ENCODE measurements at regions of chr1 and their contacts with region 1.

Region 1: GRCh38 chr1:150961799-150962198 is 12.8 kb downstream of the CERS2 start:
- DNase-seq: no peak

Region 2: GRCh38 chr1:150441121-150441520 is 520.7 kb before region 1 on chr1:
- intact Hi-C with region 1: no loop called
- DNase-seq: no peak

Region 3: GRCh38 chr1:150629115-150629928 is 332.5 kb before region 1 on chr1 and contains the start of gene ENSA:
- intact Hi-C with region 1: no loop called
- DNase-seq: peak; percentile 99
- total RNA-seq, gene ENSA: 149 to 156 TPM

Region 4: GRCh38 chr1:150925816-150926741 is 35.7 kb before region 1 on chr1 and contains the start of gene SETDB1:
- intact Hi-C with region 1: loop called in 1 of 2 experiments (anchors 1 kb)
- DNase-seq: peak; percentile 98
- total RNA-seq, gene SETDB1: 26.4 to 26.8 TPM

Region 5: GRCh38 chr1:150976879-150977694 is 15.3 kb after region 1 on chr1:
- intact Hi-C with region 1: no loop called
- DNase-seq: peak; percentile 93

Region 6: DNA sequence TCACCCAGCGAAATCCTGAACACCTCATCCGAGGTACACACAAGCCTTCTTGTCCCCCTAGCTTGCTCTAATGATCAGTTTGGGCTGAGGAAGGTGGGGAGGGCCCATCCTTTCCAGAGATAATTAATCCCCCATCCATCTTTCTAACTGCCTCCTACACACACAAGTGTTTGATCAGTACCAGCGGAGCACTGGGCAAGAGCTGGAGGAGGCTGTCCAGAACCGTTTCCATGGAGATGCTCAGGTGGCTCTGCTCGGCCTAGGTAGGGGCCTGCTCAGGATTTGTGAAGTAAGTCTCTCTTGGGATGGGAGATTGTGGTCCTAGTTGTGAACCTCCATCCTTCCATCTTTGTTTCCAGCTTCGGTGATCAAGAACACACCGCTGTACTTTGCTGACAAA is 26.1 kb after region 1 on chr1:
- intact Hi-C with region 1: loop called in 1 of 2 experiments (anchors 1 kb)
- DNase-seq: no peak

Measured in posterior vena cava (tissue), 2 donors.